Testis (tissue), 5 donors: ENCODE measurements at regions of chr2 and their contacts with region 1.

Region 1: GRCh38 chr2:207710814-207711740 is at the start of gene CCNYL1:
- DNase-seq: peak; percentile 99
- H3K4me3 ChIP-seq: peak within 1 kb of the TSS; percentile 84 to 86
- H3K27ac ChIP-seq: peak within 1 kb of the TSS; percentile 71 to 83
- H3K4me1 ChIP-seq: peaks cover 5% of the 10 kb centered on the region
- H3K27me3 ChIP-seq: no peaks in the 10 kb centered on the region
- CTCF ChIP-seq: peak in 2 of 3 experiments; percentile 8 to 52
- POLR2A ChIP-seq: peak; percentile 81
- total RNA-seq, gene CCNYL1: 13.8 to 25.6 TPM

Region 2: DNA sequence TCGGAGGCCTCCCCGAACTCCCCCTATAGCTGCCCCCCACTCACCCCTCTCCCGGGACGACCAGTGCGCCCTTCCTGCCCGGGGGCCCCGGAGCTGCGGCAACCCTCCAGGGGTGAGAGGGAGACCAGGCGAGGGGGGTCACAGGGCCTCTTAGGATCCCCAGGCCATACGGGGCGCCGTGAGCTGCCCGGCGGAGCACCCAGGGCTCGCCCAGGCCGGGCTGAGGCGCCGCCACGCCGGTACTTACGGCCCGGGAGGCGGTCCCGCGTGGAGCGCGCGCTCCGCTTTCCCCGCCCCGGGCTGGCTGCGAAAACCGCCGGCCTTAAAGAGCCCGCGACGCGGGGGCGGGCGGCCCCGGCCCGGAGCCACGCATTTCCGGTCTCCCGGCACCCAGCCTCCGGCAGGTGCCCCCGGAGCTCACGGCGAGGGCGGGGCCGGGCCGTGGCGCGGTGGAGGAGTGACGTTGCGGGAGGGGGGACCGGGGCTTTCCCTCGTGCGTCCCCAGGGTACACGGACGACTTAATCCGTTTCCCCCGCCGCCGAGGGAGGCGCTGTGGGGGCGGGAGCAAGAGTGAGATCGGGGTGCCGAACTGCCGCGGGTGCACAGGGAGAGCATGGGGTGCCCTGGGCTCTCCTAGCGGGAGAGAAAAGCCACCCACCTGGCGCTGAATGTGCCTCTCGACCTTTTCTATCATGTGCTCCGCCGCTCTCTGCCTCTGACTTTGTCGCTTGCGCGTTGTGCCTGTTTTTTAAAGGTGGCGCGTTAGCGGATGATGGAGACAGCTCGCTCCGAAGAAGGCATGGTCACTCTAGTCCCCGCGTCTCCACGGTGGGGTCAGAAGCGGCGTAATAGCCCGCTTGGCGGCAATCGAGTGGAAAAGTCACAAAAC is 85.8 kb before region 1 on chr2 and contains the start of gene METTL21A:
- intact Hi-C with region 1: loop called (anchors 5 kb)
- DNase-seq: peak; percentile 89
- H3K4me3 ChIP-seq: peak within 1 kb of the TSS; percentile 83 to 92
- H3K27ac ChIP-seq: peak within 1 kb of the TSS; percentile 87 to 91
- H3K4me1 ChIP-seq: peaks cover 16% of the 10 kb centered on the region
- H3K27me3 ChIP-seq: no peaks in the 10 kb centered on the region
- CTCF ChIP-seq: peak in 2 of 3 experiments; percentile 3 to 33
- POLR2A ChIP-seq: no peak
- total RNA-seq, gene METTL21A: 7.8 to 14.9 TPM

Region 3: DNA sequence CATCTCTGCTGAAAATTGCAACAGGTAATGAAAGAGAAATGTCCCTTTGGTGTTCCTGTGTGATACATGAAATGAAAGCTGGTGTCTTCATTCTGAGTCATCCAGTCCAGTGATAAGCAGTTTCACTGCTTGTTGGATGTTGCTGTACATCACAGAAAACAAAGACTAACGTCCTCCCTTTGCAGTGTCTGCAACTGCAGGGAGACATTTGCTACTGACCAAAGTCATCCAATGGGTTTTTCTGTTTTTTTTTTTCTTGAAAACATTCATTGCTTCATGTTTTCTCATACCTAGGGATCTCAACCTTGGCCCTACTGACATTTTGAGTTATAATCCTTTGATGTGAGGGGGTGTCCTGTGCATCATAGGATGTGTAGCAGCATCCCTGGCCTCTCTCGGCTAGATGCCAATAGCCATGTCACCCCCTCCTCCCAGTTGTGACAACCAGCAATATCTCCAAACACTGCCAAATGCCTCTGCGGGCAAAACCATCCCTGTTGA is 122.2 kb after region 1 on chr2:
- intact Hi-C with region 1: no loop called
- DNase-seq: no peak
- H3K4me3 ChIP-seq: no peak overlapping the region
- H3K27ac ChIP-seq: no peak overlapping the region
- H3K4me1 ChIP-seq: no peaks in the 10 kb centered on the region
- H3K27me3 ChIP-seq: no peaks in the 10 kb centered on the region
- CTCF ChIP-seq: no peak
- POLR2A ChIP-seq: no peak

Region 4: DNA sequence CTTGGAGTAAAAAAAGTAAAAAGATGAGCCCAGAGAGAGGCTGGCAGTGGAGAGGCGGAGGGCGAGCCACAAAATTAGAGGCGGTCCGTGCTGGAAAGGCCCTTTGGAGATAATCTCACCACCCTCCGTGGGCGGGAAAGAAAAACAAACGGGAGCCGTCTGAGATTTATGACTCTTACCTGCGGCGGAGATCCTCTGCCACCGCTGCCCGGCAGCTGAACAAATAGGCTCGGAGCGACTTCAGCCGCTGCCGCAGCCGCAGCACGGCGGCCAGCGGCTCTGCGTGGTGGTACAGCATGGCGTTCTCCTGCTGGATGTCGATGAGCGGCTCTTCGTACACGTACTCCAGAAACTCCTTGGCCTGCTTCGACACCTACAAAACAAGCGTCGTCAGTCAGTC is 219.7 kb after region 1 on chr2:
- intact Hi-C with region 1: no loop called
- DNase-seq: peak; percentile 37
- H3K4me3 ChIP-seq: peak overlapping the region in 1 of 2 donors; percentile 24
- H3K27ac ChIP-seq: no peak overlapping the region
- H3K4me1 ChIP-seq: no peaks in the 10 kb centered on the region
- H3K27me3 ChIP-seq: no peaks in the 10 kb centered on the region
- CTCF ChIP-seq: no peak
- POLR2A ChIP-seq: no peak

Region 5: DNA sequence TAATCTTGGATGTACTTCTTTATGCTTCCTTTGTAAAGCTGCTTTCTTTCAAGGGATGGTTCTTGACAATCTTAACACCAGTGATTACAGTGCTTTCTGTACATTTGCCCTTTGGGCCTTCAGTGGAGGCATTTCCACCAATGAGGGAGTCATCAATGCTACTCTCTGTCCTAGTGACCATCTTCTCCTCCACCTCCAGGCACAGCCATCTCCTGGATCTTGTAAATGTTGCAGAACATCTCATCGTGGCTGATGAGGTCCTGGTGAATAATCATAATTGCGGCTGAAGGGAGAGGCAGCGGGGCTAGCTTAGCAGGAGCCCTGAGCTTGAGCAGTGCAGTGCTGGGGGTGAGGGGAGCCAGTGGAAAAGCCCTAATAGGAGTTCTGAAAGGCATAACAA is 511.3 kb after region 1 on chr2:
- intact Hi-C with region 1: no loop called
- DNase-seq: no peak
- H3K4me3 ChIP-seq: no peak overlapping the region
- H3K27ac ChIP-seq: no peak overlapping the region
- H3K4me1 ChIP-seq: no peaks in the 10 kb centered on the region
- H3K27me3 ChIP-seq: no peaks in the 10 kb centered on the region
- CTCF ChIP-seq: no peak
- POLR2A ChIP-seq: no peak